ENCODE measurements at regions of chr3 and their contacts with region 1.

Region 1: DNA sequence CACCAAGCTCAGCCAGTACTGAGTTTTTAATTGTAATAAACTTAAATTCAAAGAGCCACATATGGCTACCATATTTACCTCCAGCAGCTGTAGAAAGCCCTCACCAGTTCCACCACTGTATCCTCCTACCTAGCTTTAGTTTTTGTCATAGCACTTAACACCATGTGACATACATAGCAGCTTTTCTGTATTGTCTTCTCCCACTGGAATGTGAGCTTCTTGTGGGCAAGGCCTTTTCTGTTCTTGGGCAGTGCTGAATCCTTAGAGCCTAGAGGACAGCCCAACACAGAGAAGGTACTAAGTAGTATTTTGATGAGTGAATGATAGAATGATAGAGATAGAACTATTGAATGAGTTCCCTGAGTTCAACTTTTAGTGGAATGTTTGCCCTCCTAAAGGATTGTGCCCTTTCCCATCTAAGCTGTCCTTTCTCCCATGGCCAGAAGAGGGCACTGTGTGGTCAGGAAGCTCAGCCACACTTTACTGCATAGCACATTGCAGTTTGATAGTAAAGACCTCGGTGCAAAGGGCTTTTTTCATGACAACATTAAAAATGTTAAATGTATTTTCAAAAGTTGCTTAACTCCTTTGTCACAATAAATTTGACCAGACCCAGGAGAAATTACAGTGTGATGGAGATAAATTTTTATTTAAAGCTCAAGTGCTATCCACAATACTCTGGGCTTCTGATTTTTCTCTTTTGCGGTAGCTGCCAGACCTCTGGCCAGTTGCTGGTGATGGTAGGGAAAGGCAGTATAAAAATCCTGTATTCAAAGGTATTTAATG is 115.8 kb downstream of the GHSR start:
- DNase-seq: peak; percentile 72
- H3K4me3 Mint-ChIP-seq: no peak overlapping the region
- H3K27ac Mint-ChIP-seq: no peak overlapping the region
- H3K4me1 Mint-ChIP-seq: peaks cover 4% of the 10 kb centered on the region
- H3K27me3 Mint-ChIP-seq: no peaks in the 10 kb centered on the region

Region 2: GRCh38 chr3:172039436-172040077 is 292.9 kb before region 1 on chr3 and contains the start of gene FNDC3B:
- CTCF ChIA-PET with region 1: interaction called, 8 read pairs
- intact Hi-C with region 1: loop called (anchors 2 kb)
- DNase-seq: peak; percentile 96
- H3K4me3 Mint-ChIP-seq: peak within 1 kb of the TSS; percentile 91
- H3K27ac Mint-ChIP-seq: peak within 1 kb of the TSS; percentile 89
- H3K4me1 Mint-ChIP-seq: peaks cover 21% of the 10 kb centered on the region
- H3K27me3 Mint-ChIP-seq: no peaks in the 10 kb centered on the region
- total RNA-seq, gene FNDC3B: 9.2 to 13.5 TPM

Region 3: DNA sequence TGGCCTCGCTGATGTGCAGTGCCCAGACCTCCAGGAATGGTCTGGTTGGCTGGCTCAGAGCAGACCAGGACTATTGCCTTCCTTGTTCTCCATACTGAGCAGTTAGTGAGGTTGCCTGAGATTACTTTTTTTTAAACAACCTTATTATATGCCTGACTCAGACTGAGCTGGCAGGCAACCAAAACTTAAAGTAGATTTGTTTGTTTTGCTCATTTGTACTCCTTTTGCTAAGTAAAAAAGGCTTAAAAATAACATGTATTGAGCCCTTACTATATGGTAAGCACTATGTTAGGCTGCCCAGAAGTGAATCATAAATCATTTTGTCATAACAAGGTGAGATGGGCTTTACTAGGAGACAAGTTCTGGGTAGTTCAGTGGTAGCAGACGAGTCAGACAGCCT is 23.4 kb after region 1 on chr3:
- CTCF ChIA-PET with region 1: interaction called, 10 read pairs
- intact Hi-C with region 1: no loop called
- DNase-seq: no peak
- H3K4me3 Mint-ChIP-seq: no peak overlapping the region
- H3K27ac Mint-ChIP-seq: no peak overlapping the region
- H3K4me1 Mint-ChIP-seq: no peaks in the 10 kb centered on the region
- H3K27me3 Mint-ChIP-seq: no peaks in the 10 kb centered on the region

Region 4: GRCh38 chr3:172622916-172623700 is 290.7 kb after region 1 on chr3:
- CTCF ChIA-PET with region 1: interaction called, 9 read pairs
- intact Hi-C with region 1: loop called (anchors 1 kb)
- DNase-seq: peak; percentile 64
- H3K4me3 Mint-ChIP-seq: no peak overlapping the region
- H3K27ac Mint-ChIP-seq: no peak overlapping the region
- H3K4me1 Mint-ChIP-seq: peaks cover 11% of the 10 kb centered on the region
- H3K27me3 Mint-ChIP-seq: no peaks in the 10 kb centered on the region

Region 5: GRCh38 chr3:172673210-172673679 is 340.8 kb after region 1 on chr3:
- CTCF ChIA-PET with region 1: interaction called, 11 read pairs
- intact Hi-C with region 1: no loop called
- DNase-seq: peak; percentile 89
- H3K4me3 Mint-ChIP-seq: no peak overlapping the region
- H3K27ac Mint-ChIP-seq: no peak overlapping the region
- H3K4me1 Mint-ChIP-seq: no peaks in the 10 kb centered on the region
- H3K27me3 Mint-ChIP-seq: no peaks in the 10 kb centered on the region